ENCODE measurements at regions of chr11 and their contacts with region 1.

Region 1: DNA sequence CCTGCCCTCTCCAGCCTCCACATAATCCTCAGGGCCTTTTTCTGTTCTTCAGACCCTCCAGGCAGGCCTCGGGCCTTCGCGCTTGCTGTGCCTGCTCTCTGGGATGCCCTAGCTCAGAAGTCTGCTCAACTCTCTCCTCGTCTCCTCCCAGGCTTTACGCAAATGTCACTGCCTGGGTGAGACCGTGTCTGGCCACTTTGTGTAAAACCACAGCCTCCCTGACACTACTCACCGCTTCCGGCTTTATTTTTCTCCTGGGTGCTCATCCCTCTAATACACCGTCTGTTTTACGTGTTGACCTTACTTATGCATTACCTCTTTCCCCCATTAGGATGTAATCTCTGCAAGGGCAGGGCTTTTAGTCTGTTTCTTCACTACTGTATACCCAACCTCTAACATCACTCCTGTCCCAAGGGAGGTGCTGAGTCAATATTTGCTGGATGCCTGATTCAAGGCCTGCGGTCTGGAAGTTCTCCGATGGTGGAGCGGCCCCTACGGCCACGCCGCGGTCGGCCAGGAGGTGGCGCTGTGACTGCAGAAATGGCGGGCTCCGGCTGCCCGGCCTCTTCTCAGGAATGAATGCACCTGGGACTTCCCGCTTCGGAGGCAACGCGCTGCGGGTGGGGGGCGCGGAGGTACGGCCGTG is 58.2 kb upstream of the THY1 start:
- DNase-seq: peak; percentile 46 to 68
- ATAC-seq: peak; percentile 76 to 87
- H3K4me3 ChIP-seq: no peak overlapping the region
- H3K27ac ChIP-seq: no peak overlapping the region
- H3K4me1 ChIP-seq: peaks cover 0 to 4% of the 10 kb centered on the region in 2 donors
- H3K27me3 ChIP-seq: no peaks in the 10 kb centered on the region
- CTCF ChIP-seq: peak; percentile 72 to 91 (median 91)
- POLR2A ChIP-seq: no peak

Region 2: DNA sequence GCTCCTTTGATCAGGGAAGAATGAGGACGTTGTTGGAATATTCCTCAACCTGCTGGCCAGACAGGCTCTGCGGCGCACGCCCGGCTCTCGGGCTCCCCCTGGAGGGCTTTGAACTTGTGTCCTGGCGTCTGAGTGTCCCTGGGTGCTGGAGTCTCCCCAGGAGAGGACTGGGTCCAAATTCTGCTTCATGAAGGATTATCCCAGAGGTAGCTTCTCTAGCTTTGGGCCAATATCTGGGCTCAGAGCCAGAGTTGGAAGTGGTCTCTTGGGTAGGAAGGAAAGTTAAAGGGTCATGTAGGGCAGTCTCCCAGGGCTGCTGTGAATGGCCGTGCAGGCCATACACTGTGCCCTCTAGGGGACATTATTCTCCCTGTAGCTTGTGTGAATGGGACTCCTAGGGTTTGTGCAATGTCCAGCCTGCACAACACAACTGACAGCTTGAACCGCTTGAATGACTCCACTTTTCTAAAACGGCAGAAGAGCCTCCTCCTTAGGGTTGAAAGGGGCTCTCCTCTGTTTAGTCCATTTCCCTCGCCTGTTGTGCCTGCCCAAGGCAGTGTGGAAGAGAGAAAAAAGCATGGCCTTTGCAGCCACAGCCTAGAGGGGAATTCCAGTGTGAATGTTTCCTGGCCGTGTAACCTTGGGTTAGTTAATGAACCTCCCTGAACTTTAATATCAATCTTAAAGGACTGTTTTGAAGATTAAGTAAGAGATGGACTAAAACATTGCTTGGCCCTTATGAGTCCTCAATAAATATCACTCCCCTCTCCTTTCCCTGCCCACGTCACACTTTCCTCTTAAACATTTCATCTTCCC is 53.0 kb after region 1 on chr11:
- in situ Hi-C with region 1: loop called in 2 of 4 experiments (anchors 5 to 10 kb)
- intact Hi-C with region 1: loop called (anchors 2 kb)
- DNase-seq: peak in 1 of 2 donors; percentile 29
- ATAC-seq: peak; percentile 63 to 81
- H3K4me3 ChIP-seq: no peak overlapping the region
- H3K27ac ChIP-seq: no peak overlapping the region
- H3K4me1 ChIP-seq: no peaks in the 10 kb centered on the region
- H3K27me3 ChIP-seq: no peaks in the 10 kb centered on the region
- CTCF ChIP-seq: peak; percentile 15 to 83 (median 69)
- POLR2A ChIP-seq: no peak

Region 3: DNA sequence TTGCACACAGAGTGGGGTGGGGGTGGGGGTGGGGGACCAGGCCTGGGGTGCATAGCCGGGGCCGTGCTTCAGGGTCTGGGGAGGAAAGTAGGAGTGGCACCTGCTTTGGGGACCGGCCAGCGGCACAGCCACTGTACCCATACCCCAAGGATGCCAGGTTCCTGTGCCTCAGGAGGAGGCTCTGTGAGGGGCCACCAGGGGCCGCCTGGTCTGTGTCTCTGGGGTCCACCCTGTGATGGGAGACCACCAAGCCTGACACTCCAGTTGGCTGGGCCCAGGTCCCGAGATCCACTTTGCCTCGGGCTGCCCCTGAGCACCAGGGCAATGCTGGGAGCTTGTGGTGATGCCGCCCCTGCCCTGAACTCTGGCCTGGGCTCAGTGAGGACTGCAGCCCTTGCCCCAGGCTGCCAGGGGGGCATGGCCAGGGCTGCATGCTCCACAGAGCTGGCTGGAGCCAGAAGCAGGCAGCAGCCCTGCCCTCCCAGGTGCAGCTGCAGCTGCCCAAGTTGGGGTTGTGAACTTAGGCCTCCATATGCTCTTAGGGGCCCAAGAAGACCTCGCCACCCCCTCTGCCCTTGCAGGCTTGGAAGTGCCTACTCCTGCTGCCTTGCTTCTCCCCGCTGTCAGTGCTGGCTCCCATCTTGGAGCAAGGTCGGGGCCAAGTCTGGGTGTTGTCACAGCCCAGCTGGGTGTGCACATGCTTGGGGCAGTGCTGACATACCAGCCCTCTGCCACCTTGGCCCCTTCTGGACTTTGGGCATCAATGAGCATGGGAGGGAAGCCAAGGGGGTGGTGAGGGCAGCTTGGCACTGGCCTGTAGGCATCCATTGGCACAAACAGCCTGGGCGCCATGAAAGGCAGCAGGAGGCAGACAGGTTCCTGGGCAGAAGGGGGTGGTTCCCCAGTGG is 65.1 kb after region 1 on chr11:
- in situ Hi-C with region 1: no loop called
- intact Hi-C with region 1: no loop called
- DNase-seq: no peak
- ATAC-seq: no peak
- H3K4me3 ChIP-seq: no peak overlapping the region
- H3K27ac ChIP-seq: no peak overlapping the region
- H3K4me1 ChIP-seq: no peaks in the 10 kb centered on the region
- H3K27me3 ChIP-seq: no peaks in the 10 kb centered on the region
- CTCF ChIP-seq: no peak
- POLR2A ChIP-seq: no peak

Region 4: DNA sequence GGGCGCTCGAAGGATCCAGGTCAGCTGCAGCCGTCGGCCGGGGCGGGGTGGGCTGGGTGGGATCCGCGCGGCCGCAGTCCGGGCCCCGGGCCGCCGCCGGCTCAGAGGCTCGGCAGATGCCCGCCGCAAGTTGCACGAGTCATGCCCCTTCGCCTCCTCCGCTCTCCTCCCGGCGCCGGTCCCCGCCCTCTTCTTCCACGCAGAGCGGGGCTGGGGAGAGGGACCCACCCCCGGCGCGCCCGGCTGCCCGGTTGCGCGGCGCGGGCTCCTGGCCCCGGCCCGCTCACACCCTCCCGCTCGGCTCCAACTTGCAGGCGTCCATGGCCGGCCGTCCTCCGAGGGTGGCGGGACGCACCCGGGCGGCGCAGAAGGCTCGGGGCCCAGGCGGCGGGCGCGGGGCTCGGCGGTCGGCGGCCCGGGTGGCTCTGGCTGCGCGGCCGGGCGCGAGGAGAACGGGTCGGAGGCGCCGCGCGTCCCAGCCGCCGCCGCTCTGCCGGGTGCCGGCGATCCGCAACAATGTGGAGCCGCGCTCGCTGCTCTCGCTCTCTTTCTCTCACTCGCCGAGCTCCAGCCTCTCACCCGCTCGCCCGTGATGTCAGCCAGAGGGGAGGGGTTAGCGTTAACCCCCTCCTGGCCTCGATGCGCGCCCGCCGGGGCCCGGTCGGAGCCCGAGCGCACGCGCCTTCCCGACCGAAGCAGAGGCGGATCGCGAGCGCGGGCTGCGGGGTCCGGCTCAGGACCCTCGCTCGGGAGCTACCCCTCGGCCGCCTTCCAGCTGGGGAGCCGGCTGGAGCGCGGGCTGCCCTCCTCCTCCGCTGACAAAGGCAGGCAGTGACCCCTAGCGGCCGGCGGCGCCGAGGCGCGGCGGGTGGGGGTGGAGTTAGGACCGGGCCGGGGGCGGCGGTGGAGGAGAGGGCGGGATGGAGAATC is 247.8 kb after region 1 on chr11 and contains the start of gene NECTIN1:
- in situ Hi-C with region 1: loop called in 2 of 4 experiments (anchors 25 kb)
- intact Hi-C with region 1: no loop called
- DNase-seq: peak; percentile 67 to 68
- ATAC-seq: peak; percentile 95 to 97
- H3K4me3 ChIP-seq: peak within 1 kb of the TSS; percentile 57 to 99 (median 79)
- H3K27ac ChIP-seq: peak within 1 kb of the TSS; percentile 52 to 79 (median 74)
- H3K4me1 ChIP-seq: peaks cover 3 to 18% of the 10 kb centered on the region in 2 donors
- H3K27me3 ChIP-seq: peaks cover 13 to 15% (median 14%) of the 10 kb centered on the region in 3 donors
- CTCF ChIP-seq: peak; percentile 68 to 98 (median 88)
- POLR2A ChIP-seq: peak; percentile 59 to 81
- total RNA-seq, gene NECTIN1: 0.66 to 2.2 (median 0.92) TPM

Region 5: GRCh38 chr11:120079750-120080490 is 598.8 kb after region 1 on chr11:
- in situ Hi-C with region 1: loop called in 1 of 4 experiments (anchors 25 kb)
- intact Hi-C with region 1: no loop called
- DNase-seq: no peak
- ATAC-seq: no peak
- H3K4me3 ChIP-seq: no peak overlapping the region
- H3K27ac ChIP-seq: no peak overlapping the region
- H3K4me1 ChIP-seq: no peaks in the 10 kb centered on the region
- H3K27me3 ChIP-seq: no peaks in the 10 kb centered on the region
- CTCF ChIP-seq: peak; percentile 25 to 54 (median 38)
- POLR2A ChIP-seq: no peak

Region 6: GRCh38 chr11:120108154-120108865 is 627.2 kb after region 1 on chr11:
- in situ Hi-C with region 1: loop called in 3 of 4 experiments (anchors 25 kb)
- intact Hi-C with region 1: loop called (anchors 1 kb)
- DNase-seq: peak; percentile 31 to 37
- ATAC-seq: peak; percentile 66 to 78
- H3K4me3 ChIP-seq: no peak overlapping the region
- H3K27ac ChIP-seq: no peak overlapping the region
- H3K4me1 ChIP-seq: no peaks in the 10 kb centered on the region
- H3K27me3 ChIP-seq: no peaks in the 10 kb centered on the region
- CTCF ChIP-seq: peak; percentile 87 to 98 (median 94)
- POLR2A ChIP-seq: no peak